Activated CD4-positive, alpha-beta T cell treated with anti-CD3 and anti-CD28 coated beads, Interleukin-2, amount 10 ng/mL, durations not matched to agents 24 days and 14 days (primary cell): ENCODE measurements at regions of chr2 and their contacts with region 1.

Region 1: GRCh38 chr2:109368798-109369197 is 239.8 kb downstream of the SH3RF3 start:
- DNase-seq: no peak
- H3K4me3 Mint-ChIP-seq: no peak overlapping the region
- H3K27ac Mint-ChIP-seq: no peak overlapping the region
- H3K4me1 Mint-ChIP-seq: no peaks in the 10 kb centered on the region
- H3K27me3 Mint-ChIP-seq: peaks cover 5% of the 10 kb centered on the region

Region 2: DNA sequence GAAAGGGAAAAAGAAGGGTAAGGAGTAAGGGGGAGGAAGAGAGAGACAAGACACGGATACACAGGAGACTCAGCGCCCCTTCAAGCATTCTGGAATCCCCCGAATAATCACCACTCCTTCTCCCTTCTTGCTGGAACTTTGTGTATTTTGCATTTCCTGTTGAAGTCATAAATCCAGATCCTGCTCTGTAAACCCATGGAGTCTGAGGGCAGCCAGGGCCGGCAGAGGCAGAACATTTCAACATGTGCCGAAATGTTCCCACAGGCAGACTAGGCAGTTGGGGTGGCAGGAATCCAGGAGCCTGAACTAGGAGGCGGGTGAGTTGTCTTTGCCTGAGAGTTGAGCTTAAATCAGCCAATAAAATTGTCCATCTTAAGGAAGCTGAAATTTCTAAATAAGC is 46.7 kb before region 1 on chr2:
- intact Hi-C with region 1: loop called (anchors 5 kb)
- DNase-seq: no peak
- H3K4me3 Mint-ChIP-seq: no peak overlapping the region
- H3K27ac Mint-ChIP-seq: no peak overlapping the region
- H3K4me1 Mint-ChIP-seq: peaks cover 11% of the 10 kb centered on the region
- H3K27me3 Mint-ChIP-seq: peaks cover 39% of the 10 kb centered on the region